ENCODE measurements at regions of chr13 and their contacts with region 1.

Region 1: GRCh38 chr13:39451860-39452301 is 151.1 kb downstream of the LHFPL6 start:
- DNase-seq: peak; percentile 40 to 63
- ATAC-seq: peak; percentile 59 to 87 (median 74)
- H3K4me3 ChIP-seq: no peak overlapping the region
- H3K27ac ChIP-seq: peak overlapping the region; percentile 62 to 92 (median 75)
- H3K4me1 ChIP-seq: peaks cover 31 to 96% (median 83%) of the 10 kb centered on the region in 9 donors
- H3K27me3 ChIP-seq: no peaks in the 10 kb centered on the region
- CTCF ChIP-seq: no peak

Region 2: GRCh38 chr13:38900188-38900587 is 551.7 kb before region 1 on chr13:
- intact Hi-C with region 1: no loop called
- DNase-seq: no peak
- ATAC-seq: no peak
- H3K4me3 ChIP-seq: no peak overlapping the region
- H3K27ac ChIP-seq: no peak overlapping the region
- H3K4me1 ChIP-seq: no peaks in the 10 kb centered on the region
- H3K27me3 ChIP-seq: no peaks in the 10 kb centered on the region
- CTCF ChIP-seq: no peak

Region 3: DNA sequence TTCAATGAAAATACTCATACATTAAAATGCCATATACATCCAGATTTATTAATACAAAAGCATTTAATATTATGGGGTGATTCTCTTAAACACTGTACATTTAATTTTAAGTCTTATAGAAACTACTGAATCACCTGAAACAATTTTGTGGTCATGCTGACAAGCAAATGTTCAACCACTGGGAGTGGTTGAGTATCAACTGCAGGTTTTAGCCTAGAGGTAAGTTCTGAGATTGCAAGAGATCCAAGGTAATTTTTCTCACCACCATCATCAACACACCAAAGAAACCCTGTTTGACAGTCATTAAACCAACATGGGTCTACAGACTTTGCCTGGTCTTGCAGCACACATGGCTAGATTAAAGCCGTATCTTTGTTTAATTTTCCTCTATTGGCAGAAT is 45.2 kb before region 1 on chr13:
- intact Hi-C with region 1: loop called in 1 of 10 experiments (anchors 5 kb)
- DNase-seq: no peak
- ATAC-seq: no peak
- H3K4me3 ChIP-seq: no peak overlapping the region
- H3K27ac ChIP-seq: peak overlapping the region in 1 of 10 donors; percentile 87
- H3K4me1 ChIP-seq: peaks cover 0 to 89% (median 69%) of the 10 kb centered on the region in 9 donors
- H3K27me3 ChIP-seq: no peaks in the 10 kb centered on the region
- CTCF ChIP-seq: no peak

Region 4: DNA sequence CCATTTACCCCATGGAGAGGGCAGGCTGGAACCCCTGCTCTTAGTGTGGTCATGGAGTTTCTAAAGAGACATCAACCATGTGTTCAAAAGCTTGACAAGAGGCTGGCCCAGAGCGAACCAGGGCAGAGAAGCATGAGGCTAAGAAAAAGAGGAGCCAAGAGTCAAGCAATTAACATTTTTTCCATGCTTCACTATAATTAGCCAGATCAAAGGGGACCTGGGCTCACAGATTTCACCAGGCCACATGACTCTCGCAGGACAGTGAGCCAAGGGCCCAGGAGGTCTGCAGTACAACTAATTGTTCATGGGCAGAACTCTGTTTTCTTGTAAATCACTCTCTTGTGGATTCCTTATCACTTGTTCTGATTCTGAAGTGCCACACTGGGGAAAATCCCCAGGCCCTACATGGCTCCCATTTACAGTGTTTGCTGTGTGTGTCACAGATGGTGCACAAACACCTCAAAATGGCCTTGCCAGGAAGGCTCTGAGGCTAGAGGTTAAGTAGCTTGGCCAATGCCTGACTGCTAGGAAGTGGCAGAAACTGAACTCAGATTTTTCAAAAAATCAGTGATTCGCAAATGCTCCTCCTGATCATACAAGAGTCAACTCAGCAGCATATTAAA is 49.9 kb after region 1 on chr13:
- intact Hi-C with region 1: loop called in 1 of 10 experiments (anchors 10 kb)
- DNase-seq: peak; percentile 33 to 65
- ATAC-seq: peak; percentile 75 to 94 (median 90)
- H3K4me3 ChIP-seq: no peak overlapping the region
- H3K27ac ChIP-seq: peak overlapping the region in 9 of 10 donors; percentile 57 to 91 (median 78)
- H3K4me1 ChIP-seq: peaks cover 4 to 96% (median 67%) of the 10 kb centered on the region in 9 donors
- H3K27me3 ChIP-seq: no peaks in the 10 kb centered on the region
- CTCF ChIP-seq: no peak

Region 5: DNA sequence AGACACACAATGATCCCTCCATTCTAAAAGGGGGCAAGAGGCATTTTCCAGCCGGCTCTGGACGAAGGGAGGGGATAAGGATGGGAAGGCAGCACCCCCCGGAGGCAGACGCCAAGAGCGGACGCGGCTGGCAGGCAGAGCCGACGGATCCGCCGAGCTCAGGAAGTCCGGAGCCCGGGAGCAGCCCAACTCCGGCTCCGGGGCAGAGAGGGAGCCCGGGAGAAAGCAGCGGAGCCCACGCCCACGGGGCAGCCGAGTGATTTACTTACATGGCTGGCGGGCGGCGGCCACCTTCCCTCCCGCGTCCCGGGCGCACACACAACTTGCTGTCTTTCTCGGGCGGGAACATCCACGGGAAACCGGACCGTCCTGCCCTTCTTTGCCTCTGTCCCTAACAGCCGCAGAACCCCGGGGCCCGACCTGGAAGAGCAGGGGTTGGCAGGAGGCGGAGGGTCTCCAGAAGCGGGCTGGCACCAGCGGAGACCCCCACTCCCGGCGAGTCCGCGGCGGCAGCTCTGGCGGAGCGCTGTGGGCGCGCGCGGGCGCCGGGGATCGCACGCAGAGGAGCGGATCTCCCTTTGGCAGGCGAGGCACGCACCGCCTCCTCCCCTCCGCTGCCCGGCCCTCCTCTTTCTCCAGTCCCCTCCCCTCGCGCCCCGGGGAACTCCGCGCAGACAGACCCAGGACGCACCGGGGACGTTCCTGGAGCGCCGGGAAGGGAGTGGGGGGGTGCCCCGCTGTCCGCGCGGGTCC is 150.9 kb after region 1 on chr13 and contains the start of gene LHFPL6:
- intact Hi-C with region 1: loop called in 2 of 10 experiments (anchors 5 kb)
- DNase-seq: peak; percentile 88 to 90
- ATAC-seq: peak; percentile 93 to 98 (median 94)
- H3K4me3 ChIP-seq: peak within 1 kb of the TSS; percentile 69 to 96 (median 90)
- H3K27ac ChIP-seq: peak within 1 kb of the TSS; percentile 87 to 98 (median 96)
- H3K4me1 ChIP-seq: peaks cover 0 to 50% (median 21%) of the 10 kb centered on the region in 9 donors
- H3K27me3 ChIP-seq: peaks cover 0 to 33% (median 0%) of the 10 kb centered on the region in 7 donors
- CTCF ChIP-seq: peak in 7 of 9 donors; percentile 39 to 69 (median 45)
- total RNA-seq, gene LHFPL6: 41.5 to 65.8 (median 58.2) TPM

Region 6: GRCh38 chr13:39665763-39666162 is 213.9 kb after region 1 on chr13:
- intact Hi-C with region 1: no loop called
- DNase-seq: no peak
- ATAC-seq: no peak
- H3K4me3 ChIP-seq: no peak overlapping the region
- H3K27ac ChIP-seq: no peak overlapping the region
- H3K4me1 ChIP-seq: peaks cover 0 to 18% (median 6%) of the 10 kb centered on the region in 9 donors
- H3K27me3 ChIP-seq: no peaks in the 10 kb centered on the region
- CTCF ChIP-seq: no peak

Measured in heart right ventricle (tissue), 16 donors.